Activated CD8-positive, alpha-beta T cell treated with anti-CD3 and anti-CD28 coated beads for 36 hours (primary cell): ENCODE measurements at regions of chr11 and their contacts with region 1.

Region 1: DNA sequence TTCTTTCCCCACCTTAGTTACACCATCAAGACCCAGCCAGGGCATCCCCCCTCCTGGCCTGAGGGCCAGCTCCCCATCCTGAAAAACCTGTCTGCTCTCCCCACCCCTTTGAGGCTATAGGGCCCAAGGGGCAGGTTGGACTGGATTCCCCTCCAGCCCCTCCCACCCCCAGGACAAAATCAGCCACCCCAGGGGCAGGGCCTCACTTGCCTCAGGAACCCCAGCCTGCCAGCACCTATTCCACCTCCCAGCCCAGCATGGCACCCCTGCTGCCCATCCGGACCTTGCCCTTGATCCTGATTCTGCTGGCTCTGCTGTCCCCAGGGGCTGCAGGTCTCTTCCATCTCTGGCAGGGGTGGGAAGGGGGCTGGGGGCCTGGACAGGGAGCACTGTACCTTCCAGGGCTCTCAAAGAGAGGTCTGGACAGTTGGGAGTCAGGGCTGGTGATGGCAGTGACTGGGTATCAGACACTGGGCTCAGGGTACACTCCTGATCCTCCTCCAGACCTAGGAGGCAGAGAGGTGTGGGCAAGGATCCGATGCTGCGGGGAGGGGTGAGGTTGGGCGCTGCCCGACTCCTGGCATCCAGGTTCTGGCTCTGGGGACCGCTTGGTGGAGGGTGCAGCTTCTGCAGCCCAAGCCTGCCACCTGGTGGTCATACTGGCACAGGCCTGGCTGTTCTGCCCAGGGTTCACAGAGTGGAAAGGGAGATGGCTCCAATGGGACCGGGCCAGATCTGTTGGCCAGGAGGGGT is at the start of gene UPK2:
- DNase-seq: peak; percentile 93
- ATAC-seq: peak; percentile 99
- H3K4me3 Mint-ChIP-seq: no peak within 1 kb of the TSS
- H3K27ac Mint-ChIP-seq: no peak within 1 kb of the TSS
- H3K4me1 Mint-ChIP-seq: peaks cover 3% of the 10 kb centered on the region
- H3K27me3 Mint-ChIP-seq: no peaks in the 10 kb centered on the region
- CTCF ChIP-seq: peak; percentile 80
- total RNA-seq, gene UPK2: 1.5 to 2.2 TPM

Region 2: GRCh38 chr11:118907051-118908042 is 48.9 kb before region 1 on chr11:
- CTCF ChIA-PET with region 1: interaction called, 20 read pairs
- POLR2A ChIA-PET with region 1: interaction called, 4 read pairs
- intact Hi-C with region 1: loop called (anchors 2 kb)
- DNase-seq: peak; percentile 92
- ATAC-seq: peak; percentile 61
- H3K4me3 Mint-ChIP-seq: no peak overlapping the region
- H3K27ac Mint-ChIP-seq: peak overlapping the region; percentile 85
- H3K4me1 Mint-ChIP-seq: peaks cover 46% of the 10 kb centered on the region
- H3K27me3 Mint-ChIP-seq: no peaks in the 10 kb centered on the region
- CTCF ChIP-seq: peak; percentile 86